ENCODE measurements at regions of chr13 and their contacts with region 1.

Region 1: GRCh38 chr13:105972871-105973491 is 562.5 kb downstream of the EFNB2 start:
- DNase-seq: no peak
- ATAC-seq: no peak
- H3K4me3 ChIP-seq: no peak overlapping the region
- H3K27ac ChIP-seq: no peak overlapping the region
- H3K4me1 ChIP-seq: no peaks in the 10 kb centered on the region
- H3K27me3 ChIP-seq: no peaks in the 10 kb centered on the region
- CTCF ChIP-seq: no peak
- POLR2A ChIP-seq: no peak
- RAD21 ChIP-seq: no peak

Region 2: GRCh38 chr13:105670179-105670990 is 302.6 kb before region 1 on chr13:
- CTCF ChIA-PET with region 1: no interaction called
- POLR2A ChIA-PET with region 1: no interaction called
- dilution Hi-C with region 1: no loop called
- in situ Hi-C with region 1: no loop called
- intact Hi-C with region 1: no loop called
- DNase-seq: no peak
- ATAC-seq: no peak
- H3K4me3 ChIP-seq: no peak overlapping the region
- H3K27ac ChIP-seq: no peak overlapping the region
- H3K4me1 ChIP-seq: no peaks in the 10 kb centered on the region
- H3K27me3 ChIP-seq: no peaks in the 10 kb centered on the region
- CTCF ChIP-seq: no peak
- POLR2A ChIP-seq: no peak
- RAD21 ChIP-seq: no peak

Region 3: GRCh38 chr13:106220211-106220610 is 247.2 kb after region 1 on chr13:
- CTCF ChIA-PET with region 1: no interaction called
- POLR2A ChIA-PET with region 1: interaction called, 24 read pairs
- dilution Hi-C with region 1: no loop called
- in situ Hi-C with region 1: no loop called
- intact Hi-C with region 1: no loop called
- DNase-seq: no peak
- ATAC-seq: no peak; the same call in 1 of the 2 replicates
- H3K4me3 ChIP-seq: no peak overlapping the region
- H3K27ac ChIP-seq: no peak overlapping the region
- H3K4me1 ChIP-seq: no peaks in the 10 kb centered on the region
- H3K27me3 ChIP-seq: no peaks in the 10 kb centered on the region
- CTCF ChIP-seq: no peak
- POLR2A ChIP-seq: no peak
- RAD21 ChIP-seq: no peak

Measured in IMR-90 (cell line).